ENCODE measurements at regions of chr13 and their contacts with region 1.

Region 1: DNA sequence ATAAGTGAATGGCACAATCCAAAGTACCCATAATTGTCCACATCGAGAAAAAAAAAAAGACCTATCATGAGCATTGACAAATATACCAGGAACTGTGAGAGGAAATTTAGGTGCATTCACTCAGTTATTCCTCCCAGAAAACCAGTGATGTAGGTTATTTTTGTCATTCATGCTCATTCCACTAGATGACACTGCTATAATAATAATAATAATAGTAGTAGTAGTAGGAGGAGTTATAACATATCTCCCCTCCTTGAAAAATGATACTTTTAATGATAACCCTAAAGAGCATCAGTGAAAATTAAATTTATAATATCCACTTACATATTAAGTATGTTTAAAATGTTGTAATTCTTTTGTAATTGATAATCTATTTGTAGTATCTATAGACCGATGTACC is 463.9 kb upstream of the MIR17HG start:
- DNase-seq: no peak
- H3K4me3 Mint-ChIP-seq: no peak overlapping the region
- H3K27ac Mint-ChIP-seq: no peak overlapping the region
- H3K4me1 Mint-ChIP-seq: no peaks in the 10 kb centered on the region
- H3K27me3 Mint-ChIP-seq: no peaks in the 10 kb centered on the region
- CTCF ChIP-seq: no peak

Region 2: GRCh38 chr13:90968166-90968904 is 84.7 kb after region 1 on chr13:
- CTCF ChIA-PET with region 1: interaction called, 6 read pairs
- POLR2A ChIA-PET with region 1: no interaction called
- intact Hi-C with region 1: loop called (anchors 1 kb)
- DNase-seq: peak; percentile 46
- H3K4me3 Mint-ChIP-seq: no peak overlapping the region
- H3K27ac Mint-ChIP-seq: no peak overlapping the region
- H3K4me1 Mint-ChIP-seq: no peaks in the 10 kb centered on the region
- H3K27me3 Mint-ChIP-seq: no peaks in the 10 kb centered on the region
- CTCF ChIP-seq: peak; percentile 40

Region 3: DNA sequence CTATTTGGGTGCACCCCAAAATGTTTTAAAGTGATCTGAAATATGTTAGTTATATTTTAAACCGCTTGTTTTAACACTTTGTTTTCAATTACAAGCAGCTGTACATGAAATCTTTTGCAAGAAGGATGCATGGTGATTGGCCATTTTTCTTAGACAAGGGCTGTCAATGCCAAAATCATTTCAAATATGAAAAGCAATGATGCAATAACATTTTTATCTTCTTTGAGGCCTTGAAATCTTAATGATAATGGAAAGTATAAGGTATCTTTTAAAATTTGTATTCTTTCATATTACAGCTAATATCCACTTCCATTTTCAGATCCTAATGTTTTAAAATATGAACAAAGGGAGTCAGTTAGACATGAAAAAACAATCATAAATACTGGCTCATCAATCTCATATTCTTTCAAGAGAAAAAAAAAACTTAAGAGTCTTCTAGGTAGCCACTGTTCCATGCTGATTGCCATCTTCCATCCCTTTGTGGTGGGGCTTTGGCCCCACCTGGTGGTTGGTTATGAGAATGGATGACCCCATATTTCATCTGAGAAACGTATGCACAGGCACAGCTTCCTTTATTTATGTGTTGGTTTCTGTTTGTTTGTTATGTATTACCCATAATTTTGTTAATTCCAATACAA is 133.6 kb after region 1 on chr13:
- CTCF ChIA-PET with region 1: interaction called, 3 read pairs
- POLR2A ChIA-PET with region 1: no interaction called
- intact Hi-C with region 1: loop called (anchors 1 kb)
- DNase-seq: peak; percentile 80
- H3K4me3 Mint-ChIP-seq: no peak overlapping the region
- H3K27ac Mint-ChIP-seq: no peak overlapping the region
- H3K4me1 Mint-ChIP-seq: peaks cover 9% of the 10 kb centered on the region
- H3K27me3 Mint-ChIP-seq: no peaks in the 10 kb centered on the region
- CTCF ChIP-seq: peak; percentile 73

Region 4: DNA sequence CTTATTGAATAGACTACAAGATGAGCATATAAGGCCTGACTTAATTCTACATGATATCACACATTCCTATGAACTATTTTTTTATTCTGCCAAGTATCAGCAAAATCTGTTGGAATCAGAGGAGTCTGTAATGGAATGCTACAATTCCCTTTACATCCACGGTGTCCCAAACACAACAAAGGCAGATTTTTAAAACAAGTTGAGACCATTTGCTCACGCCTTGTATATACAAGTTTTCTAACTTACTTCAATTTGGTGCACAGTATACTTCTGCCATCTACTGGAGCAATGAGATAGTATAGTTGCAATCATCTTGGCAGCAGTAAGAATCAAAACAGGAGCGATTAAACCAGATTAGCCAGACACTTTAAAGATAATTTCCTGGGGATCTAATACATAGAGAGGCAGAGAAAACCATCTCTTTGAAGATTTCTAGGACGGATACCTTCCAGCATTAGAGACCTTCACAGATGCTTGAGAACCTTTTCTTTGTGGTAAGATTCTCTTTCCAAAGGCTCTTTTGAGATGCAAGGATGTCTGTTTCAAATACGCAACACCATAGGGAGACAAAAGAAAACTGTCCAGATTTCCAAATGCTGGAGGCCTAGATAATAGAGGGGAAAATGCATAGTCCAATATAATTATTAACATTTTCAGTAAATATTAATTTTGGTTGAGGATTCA is 161.9 kb after region 1 on chr13:
- CTCF ChIA-PET with region 1: no interaction called
- POLR2A ChIA-PET with region 1: no interaction called
- intact Hi-C with region 1: loop called (anchors 1 kb)
- DNase-seq: peak; percentile 36
- H3K4me3 Mint-ChIP-seq: no peak overlapping the region
- H3K27ac Mint-ChIP-seq: no peak overlapping the region
- H3K4me1 Mint-ChIP-seq: no peaks in the 10 kb centered on the region
- H3K27me3 Mint-ChIP-seq: no peaks in the 10 kb centered on the region
- CTCF ChIP-seq: peak; percentile 40